Vagina (tissue), 2 donors: ENCODE measurements at regions of chr11 and their contacts with region 1.

Region 1: GRCh38 chr11:70111269-70112016 is 33.3 kb downstream of the ANO1 start:
- DNase-seq: no peak
- H3K4me3 ChIP-seq: no peak overlapping the region
- H3K27ac ChIP-seq: peak overlapping the region; percentile 66
- H3K4me1 ChIP-seq: no peaks in the 10 kb centered on the region
- H3K27me3 ChIP-seq: no peaks in the 10 kb centered on the region
- CTCF ChIP-seq: no peak
- POLR2A ChIP-seq: no peak

Region 2: GRCh38 chr11:70397983-70398833 is 286.8 kb after region 1 on chr11 and contains the start of gene CTTN:
- intact Hi-C with region 1: loop called (anchors 5 kb)
- DNase-seq: no peak
- H3K4me3 ChIP-seq: peak within 1 kb of the TSS; percentile 92 to 94
- H3K27ac ChIP-seq: peak within 1 kb of the TSS; percentile 95
- H3K4me1 ChIP-seq: peaks cover 45% of the 10 kb centered on the region
- H3K27me3 ChIP-seq: no peaks in the 10 kb centered on the region
- CTCF ChIP-seq: no peak
- POLR2A ChIP-seq: peak in 1 of 2 donors; percentile 76
- total RNA-seq, gene CTTN: 227 TPM